ENCODE measurements at regions of chr11 and their contacts with region 1.

Region 1: DNA sequence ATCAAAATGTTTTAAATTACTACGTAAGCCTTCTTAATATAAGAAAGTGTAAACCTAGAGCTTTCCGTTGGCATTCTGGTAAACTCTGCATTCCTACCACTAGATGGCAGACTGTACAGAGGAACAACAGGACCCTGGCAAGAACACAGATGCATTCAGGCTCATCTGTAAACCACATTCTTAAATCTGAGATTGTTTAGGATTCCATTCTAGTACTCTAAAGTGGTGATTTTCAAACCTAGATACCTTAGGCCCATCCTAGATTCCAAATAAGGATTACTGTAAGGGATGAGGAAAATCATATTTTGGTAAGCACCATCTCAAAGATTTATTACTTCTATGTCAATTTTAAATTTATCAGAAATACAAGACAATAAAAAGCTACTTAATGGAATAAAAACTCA is 26.9 kb downstream of the PICALM start:
- DNase-seq: peak; percentile 64
- CTCF ChIP-seq: peak; percentile 72

Region 2: GRCh38 chr11:85772695-85773094 is 269.3 kb before region 1 on chr11:
- in situ Hi-C with region 1: no loop called
- DNase-seq: no peak
- CTCF ChIP-seq: no peak

Region 3: DNA sequence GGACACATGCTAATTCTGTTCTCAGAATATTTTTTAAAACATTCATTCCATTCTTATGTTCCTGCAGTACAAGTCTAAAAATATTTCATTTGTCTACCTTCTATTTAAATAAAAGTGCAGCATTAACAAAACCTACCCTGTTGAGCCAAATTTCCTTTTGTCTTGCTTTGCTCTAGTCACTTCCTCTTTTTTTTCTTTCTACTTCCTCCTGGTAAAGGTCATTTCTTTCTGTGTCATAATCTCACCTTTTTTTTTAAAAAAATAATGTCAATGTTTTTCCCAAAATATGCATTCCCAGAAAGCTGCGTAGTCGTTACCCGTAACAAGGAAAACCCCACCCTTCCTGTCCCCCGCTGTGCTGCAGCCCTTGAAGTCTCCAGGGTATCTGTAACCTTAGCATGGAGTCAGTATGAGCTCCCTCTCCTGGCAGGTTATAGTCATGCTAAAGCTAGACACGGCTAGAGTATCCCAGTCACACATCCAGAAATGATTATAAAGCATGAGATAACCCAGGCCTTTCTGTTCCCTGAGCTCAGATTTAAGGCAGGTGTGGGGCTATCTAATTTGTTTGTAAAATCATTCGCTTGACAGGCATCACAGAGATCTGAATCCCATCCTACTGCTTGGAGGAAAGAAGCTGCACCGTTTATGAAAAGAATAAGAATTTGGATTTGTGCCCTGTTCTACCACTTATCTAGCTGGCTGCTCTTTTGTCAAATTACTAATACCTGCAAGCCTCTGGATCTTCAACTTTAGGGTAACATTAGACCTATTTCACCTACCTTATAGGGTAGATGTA is 151.5 kb after region 1 on chr11:
- in situ Hi-C with region 1: loop called (anchors 10 kb)
- DNase-seq: peak; percentile 79
- CTCF ChIP-seq: peak; percentile 66

Measured in GM13976 (cell line).